Adrenal gland (tissue), 19 donors: ENCODE measurements at regions of chr1 and their contacts with region 1.

Region 1: DNA sequence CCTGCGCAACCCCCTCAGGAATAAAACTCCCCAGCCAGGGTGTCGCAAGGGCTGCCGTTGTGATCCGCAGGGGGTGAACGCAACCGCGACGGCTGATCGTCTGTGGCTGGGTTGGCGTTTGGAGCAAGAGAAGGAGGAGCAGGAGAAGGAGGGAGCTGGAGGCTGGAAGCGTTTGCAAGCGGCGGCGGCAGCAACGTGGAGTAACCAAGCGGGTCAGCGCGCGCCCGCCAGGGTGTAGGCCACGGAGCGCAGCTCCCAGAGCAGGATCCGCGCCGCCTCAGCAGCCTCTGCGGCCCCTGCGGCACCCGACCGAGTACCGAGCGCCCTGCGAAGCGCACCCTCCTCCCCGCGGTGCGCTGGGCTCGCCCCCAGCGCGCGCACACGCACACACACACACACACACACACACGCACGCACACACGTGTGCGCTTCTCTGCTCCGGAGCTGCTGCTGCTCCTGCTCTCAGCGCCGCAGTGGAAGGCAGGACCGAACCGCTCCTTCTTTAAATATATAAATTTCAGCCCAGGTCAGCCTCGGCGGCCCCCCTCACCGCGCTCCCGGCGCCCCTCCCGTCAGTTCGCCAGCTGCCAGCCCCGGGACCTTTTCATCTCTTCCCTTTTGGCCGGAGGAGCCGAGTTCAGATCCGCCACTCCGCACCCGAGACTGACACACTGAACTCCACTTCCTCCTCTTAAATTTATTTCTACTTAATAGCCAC is 696 bp downstream of the TGFB2 start:
- DNase-seq: peak; percentile 51 to 75 (median 63)
- H3K4me3 ChIP-seq: peak overlapping the region in 3 of 4 donors; percentile 9 to 64 (median 49)
- H3K27ac ChIP-seq: peak overlapping the region in 4 of 5 donors; percentile 18 to 83 (median 68)
- H3K4me1 ChIP-seq: peaks cover 0 to 29% of the 10 kb centered on the region in 2 donors
- H3K27me3 ChIP-seq: no peaks in the 10 kb centered on the region
- CTCF ChIP-seq: peak in 1 of 6 experiments; percentile 17
- POLR2A ChIP-seq: peak in 1 of 2 donors; percentile 14

Region 2: GRCh38 chr1:218510153-218510772 is 164.4 kb after region 1 on chr1:
- intact Hi-C with region 1: loop called in 1 of 2 experiments (anchors 10 kb)
- DNase-seq: no peak
- H3K4me3 ChIP-seq: no peak overlapping the region
- H3K27ac ChIP-seq: no peak overlapping the region
- H3K4me1 ChIP-seq: no peaks in the 10 kb centered on the region
- H3K27me3 ChIP-seq: no peaks in the 10 kb centered on the region
- CTCF ChIP-seq: no peak
- POLR2A ChIP-seq: no peak